ENCODE measurements at regions of chr1 and their contacts with region 1.

Region 1: GRCh38 chr1:15128520-15129313 is 24.8 kb upstream of the TMEM51 start:
- DNase-seq: peak; percentile 84
- H3K4me3 ChIP-seq: no peak overlapping the region
- H3K27ac ChIP-seq: no peak overlapping the region
- H3K4me1 ChIP-seq: no peaks in the 10 kb centered on the region
- H3K27me3 ChIP-seq: no peaks in the 10 kb centered on the region
- CTCF ChIP-seq: peak; percentile 75 to 88 (median 86)
- EP300 ChIP-seq: no peak
- POLR2A ChIP-seq: no peak

Region 2: DNA sequence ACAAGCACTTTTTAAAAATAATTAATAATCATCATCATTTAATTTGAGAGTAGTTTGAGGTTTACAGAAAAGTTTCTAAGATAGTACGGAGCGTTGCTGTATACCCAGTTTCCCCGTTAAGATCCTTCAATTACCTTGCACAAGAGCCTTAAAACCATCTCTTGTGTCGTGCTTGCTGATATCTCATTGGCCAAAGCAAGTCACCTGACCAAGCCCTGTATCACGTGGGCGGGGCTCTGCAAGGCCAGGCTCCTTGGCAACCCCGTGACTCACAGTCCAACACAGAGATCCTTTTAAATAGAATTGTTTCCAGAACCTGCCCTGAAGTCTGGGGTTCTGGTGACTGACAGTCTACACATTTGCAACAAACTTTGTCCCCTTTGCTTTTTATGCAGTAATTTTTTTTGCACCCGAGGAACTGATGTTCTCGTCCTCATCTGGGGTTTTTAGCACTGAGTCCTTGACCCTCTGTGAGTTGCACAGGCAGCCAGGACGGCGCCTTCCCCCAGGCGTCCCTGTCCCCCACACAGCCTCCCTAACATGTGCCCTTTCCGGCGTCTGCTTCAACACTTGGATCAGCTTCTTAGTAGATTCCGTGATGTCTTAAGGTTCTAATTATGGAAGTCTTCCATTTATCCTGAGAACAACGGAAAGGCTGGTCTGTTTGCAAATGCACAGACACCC is 158.5 kb before region 1 on chr1:
- intact Hi-C with region 1: no loop called
- DNase-seq: peak; percentile 81
- H3K4me3 ChIP-seq: no peak overlapping the region
- H3K27ac ChIP-seq: peak overlapping the region in 2 of 4 donors; percentile 8 to 25
- H3K4me1 ChIP-seq: peaks cover 0 to 36% (median 28%) of the 10 kb centered on the region in 4 donors
- H3K27me3 ChIP-seq: no peaks in the 10 kb centered on the region
- CTCF ChIP-seq: no peak
- EP300 ChIP-seq: no peak
- POLR2A ChIP-seq: no peak

Region 3: GRCh38 chr1:15188130-15188524 is 59.4 kb after region 1 on chr1:
- intact Hi-C with region 1: no loop called
- DNase-seq: no peak
- H3K4me3 ChIP-seq: no peak overlapping the region
- H3K27ac ChIP-seq: peak overlapping the region in 2 of 4 donors; percentile 37 to 59
- H3K4me1 ChIP-seq: peaks cover 0 to 41% (median 35%) of the 10 kb centered on the region in 4 donors
- H3K27me3 ChIP-seq: no peaks in the 10 kb centered on the region
- CTCF ChIP-seq: no peak
- EP300 ChIP-seq: no peak
- POLR2A ChIP-seq: no peak

Region 4: GRCh38 chr1:15272009-15272788 is 143.5 kb after region 1 on chr1:
- intact Hi-C with region 1: loop called (anchors 1 kb)
- DNase-seq: peak; percentile 83
- H3K4me3 ChIP-seq: no peak overlapping the region
- H3K27ac ChIP-seq: no peak overlapping the region
- H3K4me1 ChIP-seq: peaks cover 0 to 10% (median 6%) of the 10 kb centered on the region in 4 donors
- H3K27me3 ChIP-seq: no peaks in the 10 kb centered on the region
- CTCF ChIP-seq: peak; percentile 71 to 83 (median 80)
- EP300 ChIP-seq: no peak
- POLR2A ChIP-seq: no peak

Region 5: DNA sequence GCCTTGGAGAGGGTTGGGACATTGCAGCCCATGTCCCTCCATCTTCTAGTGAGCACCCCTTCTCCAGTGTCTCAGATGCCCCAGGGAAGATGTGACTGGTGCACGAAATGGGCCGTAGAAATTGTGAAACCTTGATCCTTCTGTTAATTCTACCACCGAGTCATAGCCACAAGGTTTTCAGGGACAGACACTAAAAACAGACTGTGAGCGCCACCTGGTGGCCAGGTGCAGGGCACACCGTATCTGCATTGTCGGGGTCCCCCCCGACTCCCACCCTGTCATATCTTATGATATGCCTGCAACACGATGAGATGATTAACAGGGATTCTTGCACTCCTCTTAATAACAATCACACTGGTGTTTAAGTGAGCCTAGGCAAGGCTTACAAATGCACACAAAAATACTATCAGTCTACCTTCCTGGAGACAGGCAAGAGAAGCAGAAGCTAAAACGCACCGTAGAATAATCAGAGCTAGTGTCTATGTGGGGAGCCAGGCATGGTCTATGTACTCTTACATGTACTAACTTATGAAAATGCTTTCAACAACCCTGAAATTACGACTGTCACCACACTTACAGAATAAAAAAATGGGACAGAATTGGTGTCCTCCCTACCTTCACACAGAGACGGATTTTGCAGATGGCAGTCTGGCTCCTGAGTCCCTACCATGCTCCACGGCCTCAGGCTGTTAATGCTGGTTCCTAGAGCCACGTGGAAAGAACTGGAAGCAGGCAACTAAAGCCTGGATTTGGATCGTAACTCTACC is 176.2 kb after region 1 on chr1:
- intact Hi-C with region 1: loop called (anchors 1 kb)
- DNase-seq: no peak
- H3K4me3 ChIP-seq: no peak overlapping the region
- H3K27ac ChIP-seq: no peak overlapping the region
- H3K4me1 ChIP-seq: no peaks in the 10 kb centered on the region
- H3K27me3 ChIP-seq: no peaks in the 10 kb centered on the region
- CTCF ChIP-seq: peak; percentile 81 to 95 (median 90)
- EP300 ChIP-seq: no peak
- POLR2A ChIP-seq: no peak

Region 6: GRCh38 chr1:15430787-15431570 is 302.3 kb after region 1 on chr1:
- intact Hi-C with region 1: loop called (anchors 10 kb)
- DNase-seq: no peak
- H3K4me3 ChIP-seq: no peak overlapping the region
- H3K27ac ChIP-seq: no peak overlapping the region
- H3K4me1 ChIP-seq: peaks cover 0 to 46% (median 29%) of the 10 kb centered on the region in 4 donors
- H3K27me3 ChIP-seq: no peaks in the 10 kb centered on the region
- CTCF ChIP-seq: peak; percentile 91 to 98 (median 97)
- EP300 ChIP-seq: no peak
- POLR2A ChIP-seq: no peak

Measured in sigmoid colon (tissue), 7 donors.